Mammary epithelial cell (primary cell): ENCODE measurements at regions of chr15 and their contacts with region 1.

Region 1: DNA sequence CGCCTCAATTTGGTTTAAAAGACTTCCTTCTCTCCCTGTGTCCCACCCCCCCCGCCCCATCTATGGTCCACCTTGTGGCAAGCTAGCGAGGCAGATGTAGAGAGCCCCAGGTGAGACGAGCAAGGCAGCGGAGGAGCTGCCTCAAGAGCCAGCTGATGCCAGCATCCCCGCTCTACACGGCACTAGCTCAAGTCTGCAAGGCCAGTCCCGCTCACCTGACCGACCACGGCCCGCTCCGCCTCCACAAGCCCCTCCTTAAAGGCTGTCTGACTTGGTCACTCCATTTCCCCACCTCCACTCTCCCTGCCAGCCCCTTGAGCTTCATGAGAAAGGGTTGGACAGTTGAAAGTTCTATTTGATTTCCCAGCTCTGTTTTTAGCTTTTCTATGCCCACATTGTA is 56.2 kb upstream of the IGF1R start:
- DNase-seq: no peak
- H3K4me3 ChIP-seq: no peak overlapping the region
- H3K27ac ChIP-seq: no peak overlapping the region
- H3K4me1 ChIP-seq: peaks cover under 1% of the 10 kb centered on the region
- H3K27me3 ChIP-seq: no peaks in the 10 kb centered on the region
- CTCF ChIP-seq: no peak

Region 2: GRCh38 chr15:98442379-98442833 is 149.7 kb before region 1 on chr15:
- CTCF ChIA-PET with region 1: no interaction called
- dilution Hi-C with region 1: no loop called
- in situ Hi-C with region 1: no loop called
- intact Hi-C with region 1: no loop called
- DNase-seq: peak; percentile 86
- H3K4me3 ChIP-seq: no peak overlapping the region
- H3K27ac ChIP-seq: no peak overlapping the region
- H3K4me1 ChIP-seq: peaks cover 6% of the 10 kb centered on the region
- H3K27me3 ChIP-seq: no peaks in the 10 kb centered on the region
- CTCF ChIP-seq: peak; percentile 89 to 97

Region 3: DNA sequence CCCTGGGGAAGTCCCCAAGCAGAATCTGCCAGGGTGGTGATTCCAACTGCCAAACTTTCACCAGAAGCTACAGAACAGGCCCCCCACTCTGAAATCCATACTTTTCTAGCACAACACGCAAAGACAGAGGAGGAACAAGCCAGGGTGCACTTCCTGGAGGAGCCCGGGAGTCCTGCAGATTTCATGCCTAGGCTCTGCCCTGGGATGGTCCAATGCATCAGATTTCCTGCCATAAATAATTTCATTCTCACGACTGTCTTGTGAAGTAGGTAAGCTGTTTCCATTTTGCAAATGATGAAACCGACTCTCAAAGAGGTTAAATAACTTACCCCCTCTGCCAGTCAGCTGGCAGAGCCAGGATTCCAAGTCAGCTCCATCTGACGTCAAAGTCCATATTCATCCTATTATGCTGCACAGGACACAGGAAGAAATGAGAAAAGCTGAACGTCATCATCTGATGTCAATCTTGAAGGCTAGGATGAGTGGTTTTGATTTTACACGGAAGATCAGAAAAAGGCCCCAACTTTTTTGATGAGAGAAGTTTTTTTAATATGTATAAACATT is 78.6 kb before region 1 on chr15:
- CTCF ChIA-PET with region 1: interaction called, 4 read pairs
- dilution Hi-C with region 1: loop called (anchors 5 kb)
- in situ Hi-C with region 1: no loop called
- intact Hi-C with region 1: no loop called
- DNase-seq: no peak
- H3K4me3 ChIP-seq: no peak overlapping the region
- H3K27ac ChIP-seq: no peak overlapping the region
- H3K4me1 ChIP-seq: no peaks in the 10 kb centered on the region
- H3K27me3 ChIP-seq: no peaks in the 10 kb centered on the region
- CTCF ChIP-seq: no peak